ENCODE measurements at regions of chr5 and their contacts with region 1.

Region 1: GRCh38 chr5:125505115-125505514 is 758.7 kb upstream of the ZNF608 start:
- DNase-seq: no peak
- H3K4me3 ChIP-seq: no peak overlapping the region
- H3K27ac ChIP-seq: no peak overlapping the region
- H3K4me1 ChIP-seq: no peaks in the 10 kb centered on the region
- H3K27me3 ChIP-seq: no peaks in the 10 kb centered on the region
- CTCF ChIP-seq: no peak

Region 2: DNA sequence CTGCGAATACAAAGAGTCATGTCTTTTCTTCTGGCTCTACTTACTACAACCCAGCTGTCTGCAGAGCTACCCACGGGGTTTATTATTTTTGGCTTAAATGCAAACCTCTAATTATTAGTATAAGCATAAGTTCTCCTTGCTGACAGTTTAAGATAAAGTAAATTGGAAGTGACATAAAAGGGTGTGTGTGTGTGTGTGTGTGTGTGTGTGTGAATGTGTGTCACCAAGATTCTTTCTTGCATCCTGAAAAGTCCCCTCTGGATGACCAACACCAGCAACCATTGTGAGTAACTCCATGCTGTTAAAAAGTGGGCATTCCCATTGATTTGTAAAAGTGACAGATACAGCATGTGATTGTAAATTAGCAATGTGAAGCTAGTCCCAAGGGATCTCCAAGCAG is 45.2 kb after region 1 on chr5:
- CTCF ChIA-PET with region 1: no interaction called
- dilution Hi-C with region 1: no loop called
- in situ Hi-C with region 1: no loop called
- intact Hi-C with region 1: loop called (anchors 5 kb)
- DNase-seq: peak; percentile 70
- H3K4me3 ChIP-seq: no peak overlapping the region
- H3K27ac ChIP-seq: no peak overlapping the region
- H3K4me1 ChIP-seq: peaks cover 15% of the 10 kb centered on the region
- H3K27me3 ChIP-seq: no peaks in the 10 kb centered on the region
- CTCF ChIP-seq: no peak

Region 3: GRCh38 chr5:125595095-125595494 is 90.0 kb after region 1 on chr5:
- CTCF ChIA-PET with region 1: no interaction called
- dilution Hi-C with region 1: no loop called
- in situ Hi-C with region 1: no loop called
- intact Hi-C with region 1: no loop called
- DNase-seq: no peak
- H3K4me3 ChIP-seq: no peak overlapping the region
- H3K27ac ChIP-seq: no peak overlapping the region
- H3K4me1 ChIP-seq: no peaks in the 10 kb centered on the region
- H3K27me3 ChIP-seq: no peaks in the 10 kb centered on the region
- CTCF ChIP-seq: no peak